Heart right ventricle (tissue), 16 donors: ENCODE measurements at regions of chr7 and their contacts with region 1.

Region 1: DNA sequence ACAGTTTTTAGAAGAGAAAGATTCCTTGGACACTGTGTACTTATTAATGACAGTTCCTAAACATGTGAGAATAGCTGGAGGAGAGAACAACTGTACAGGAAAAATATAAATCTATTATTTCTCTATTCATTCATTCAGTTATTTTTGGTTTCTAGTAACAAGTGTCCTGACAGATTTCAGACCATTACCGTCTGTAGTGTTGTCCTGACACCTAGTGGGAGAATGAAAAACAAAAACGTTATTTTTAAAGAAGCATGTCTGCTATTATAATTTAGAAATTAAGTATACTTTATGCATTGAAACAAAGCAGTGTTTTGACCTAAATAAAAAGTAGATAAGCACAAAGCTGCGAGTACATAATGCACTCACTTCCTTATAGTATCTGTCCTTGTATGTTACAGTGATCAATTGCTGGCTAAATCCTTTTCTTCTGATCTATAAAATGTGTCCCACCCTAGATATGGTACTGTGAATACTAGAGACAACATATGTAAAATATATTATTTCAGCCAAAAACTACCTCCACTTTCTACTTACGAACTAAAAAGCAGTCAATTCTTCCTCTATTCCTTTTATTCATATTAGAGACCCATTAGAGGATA is 575.6 kb downstream of the ARL4A start:
- DNase-seq: no peak
- ATAC-seq: peak in 5 of 8 donors; percentile 41 to 71 (median 58)
- H3K4me3 ChIP-seq: no peak overlapping the region
- H3K27ac ChIP-seq: no peak overlapping the region
- H3K4me1 ChIP-seq: no peaks in the 10 kb centered on the region
- H3K27me3 ChIP-seq: no peaks in the 10 kb centered on the region
- CTCF ChIP-seq: peak; percentile 36 to 78 (median 64)

Region 2: DNA sequence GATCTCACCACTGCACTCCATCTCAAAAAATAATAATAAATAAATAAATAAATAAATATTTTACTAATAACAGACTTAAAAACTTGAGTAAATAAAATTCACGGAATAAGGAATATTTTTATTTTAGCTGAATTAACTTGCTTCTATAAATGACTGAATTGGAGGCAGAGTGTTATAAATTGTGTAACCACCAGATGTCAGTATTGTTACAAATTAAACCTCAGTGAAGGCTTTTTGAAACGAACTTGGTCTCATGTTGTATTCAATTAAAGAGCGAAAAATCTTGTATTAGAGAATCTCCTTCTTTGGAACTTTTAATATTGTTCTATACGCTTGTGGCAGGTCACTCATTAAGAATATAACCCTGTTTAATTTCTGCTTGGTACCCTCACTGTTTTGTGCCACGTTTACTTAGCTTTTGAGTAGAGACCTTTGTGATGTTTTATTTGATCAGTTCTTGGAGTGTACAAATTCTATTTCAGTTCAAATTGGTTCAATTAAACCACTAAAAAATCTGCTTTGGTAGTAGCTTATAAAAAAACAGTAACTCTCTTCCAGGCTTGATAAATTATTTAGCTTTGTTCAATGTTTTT is 738.1 kb before region 1 on chr7:
- intact Hi-C with region 1: loop called in 9 of 10 experiments (anchors 2 to 5 kb)
- DNase-seq: no peak
- ATAC-seq: no peak
- H3K4me3 ChIP-seq: no peak overlapping the region
- H3K27ac ChIP-seq: no peak overlapping the region
- H3K4me1 ChIP-seq: no peaks in the 10 kb centered on the region
- H3K27me3 ChIP-seq: peaks cover 0 to 5% (median 0%) of the 10 kb centered on the region in 7 donors
- CTCF ChIP-seq: peak; percentile 38 to 77 (median 70)

Region 3: DNA sequence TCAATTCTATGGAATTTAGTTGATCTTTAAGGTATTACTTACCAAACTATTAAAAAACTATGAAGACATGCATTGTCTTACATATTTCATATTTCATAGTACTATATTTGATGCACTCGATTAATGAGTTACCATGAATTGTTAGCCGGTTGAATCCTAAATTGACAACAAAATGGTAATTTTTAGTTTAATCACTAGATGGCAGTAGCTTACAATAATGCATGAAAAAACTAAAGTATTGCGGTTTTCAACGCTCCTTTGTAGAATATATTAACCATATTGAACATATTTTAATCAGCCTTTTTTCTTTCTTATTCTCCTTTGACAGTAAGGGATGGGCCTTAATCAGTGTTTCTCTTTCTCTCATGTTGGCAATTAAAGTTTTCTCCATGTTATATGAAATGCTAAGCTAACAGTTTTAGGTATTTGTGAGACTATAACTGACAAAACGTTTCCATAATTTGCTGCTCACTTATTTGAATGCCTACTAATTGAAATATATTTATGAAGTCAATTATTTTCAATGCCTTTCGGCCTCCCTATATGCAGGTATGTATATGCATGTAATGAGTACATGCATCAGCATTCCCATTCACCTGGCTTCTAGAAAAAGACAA is 624.1 kb before region 1 on chr7:
- intact Hi-C with region 1: loop called (anchors 1 to 10 kb)
- DNase-seq: no peak
- ATAC-seq: peak in 3 of 8 donors; percentile 41 to 52 (median 43)
- H3K4me3 ChIP-seq: no peak overlapping the region
- H3K27ac ChIP-seq: no peak overlapping the region
- H3K4me1 ChIP-seq: peaks cover 0 to 22% (median 0%) of the 10 kb centered on the region in 9 donors
- H3K27me3 ChIP-seq: peaks cover 0 to 5% (median 0%) of the 10 kb centered on the region in 7 donors
- CTCF ChIP-seq: peak; percentile 52 to 83 (median 66)

Region 4: GRCh38 chr7:12647364-12648219 is 615.4 kb before region 1 on chr7:
- intact Hi-C with region 1: loop called in 1 of 10 experiments (anchors 10 kb)
- DNase-seq: no peak
- ATAC-seq: no peak
- H3K4me3 ChIP-seq: no peak overlapping the region
- H3K27ac ChIP-seq: no peak overlapping the region
- H3K4me1 ChIP-seq: no peaks in the 10 kb centered on the region
- H3K27me3 ChIP-seq: no peaks in the 10 kb centered on the region
- CTCF ChIP-seq: no peak

Region 5: GRCh38 chr7:13290975-13291374 is 27.9 kb after region 1 on chr7:
- intact Hi-C with region 1: no loop called
- DNase-seq: no peak
- ATAC-seq: no peak
- H3K4me3 ChIP-seq: no peak overlapping the region
- H3K27ac ChIP-seq: no peak overlapping the region
- H3K4me1 ChIP-seq: no peaks in the 10 kb centered on the region
- H3K27me3 ChIP-seq: no peaks in the 10 kb centered on the region
- CTCF ChIP-seq: no peak